ENCODE measurements at regions of chr13 and their contacts with region 1.

Region 1: GRCh38 chr13:21476893-21477472 is 17.9 kb upstream of the ZDHHC20 start:
- DNase-seq: peak; percentile 64 to 89 (median 72)
- ATAC-seq: peak; percentile 80
- H3K4me3 ChIP-seq: peak overlapping the region; percentile 37
- H3K4me3 Mint-ChIP-seq: peak overlapping the region; percentile 78
- H3K27ac ChIP-seq: no peak overlapping the region
- H3K27ac Mint-ChIP-seq: no peak overlapping the region
- H3K4me1 ChIP-seq: peaks cover 6% of the 10 kb centered on the region
- H3K4me1 Mint-ChIP-seq: peaks cover 17% of the 10 kb centered on the region
- H3K27me3 ChIP-seq: no peaks in the 10 kb centered on the region
- H3K27me3 Mint-ChIP-seq: peaks cover 10% of the 10 kb centered on the region
- CTCF ChIP-seq: peak; percentile 97

Region 2: GRCh38 chr13:20713751-20714150 is 763.2 kb before region 1 on chr13:
- CTCF ChIA-PET with region 1: no interaction called
- POLR2A ChIA-PET with region 1: no interaction called
- intact Hi-C with region 1: loop called in 1 of 2 experiments (anchors 5 kb)
- DNase-seq: no peak
- ATAC-seq: no peak
- H3K4me3 ChIP-seq: no peak overlapping the region
- H3K4me3 Mint-ChIP-seq: no peak overlapping the region
- H3K27ac ChIP-seq: no peak overlapping the region
- H3K27ac Mint-ChIP-seq: no peak overlapping the region
- H3K4me1 ChIP-seq: peaks cover 11% of the 10 kb centered on the region
- H3K4me1 Mint-ChIP-seq: peaks cover 11% of the 10 kb centered on the region
- H3K27me3 ChIP-seq: no peaks in the 10 kb centered on the region
- H3K27me3 Mint-ChIP-seq: peaks cover 9% of the 10 kb centered on the region
- CTCF ChIP-seq: no peak

Region 3: DNA sequence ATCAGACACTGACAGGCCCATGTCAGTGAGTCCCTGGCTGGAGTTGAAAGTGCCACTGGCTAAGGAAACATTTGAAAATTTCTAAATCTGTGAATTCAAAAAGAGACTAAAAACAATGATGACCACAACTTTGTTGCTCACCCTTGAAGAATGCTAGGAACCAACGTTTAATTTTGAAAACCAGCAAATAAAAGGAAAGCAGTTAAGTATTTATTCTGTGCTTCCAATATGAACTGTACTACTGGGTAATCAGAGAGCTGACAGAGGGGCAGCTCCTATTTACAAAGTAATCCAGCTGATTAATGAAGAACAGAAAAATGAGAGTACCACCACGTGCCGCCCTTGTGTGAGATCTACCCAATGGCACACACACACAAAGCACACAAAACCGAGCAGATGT is 370.9 kb before region 1 on chr13:
- CTCF ChIA-PET with region 1: interaction called, 10 read pairs
- POLR2A ChIA-PET with region 1: no interaction called
- intact Hi-C with region 1: loop called (anchors 1 kb)
- DNase-seq: no peak
- ATAC-seq: no peak
- H3K4me3 ChIP-seq: no peak overlapping the region
- H3K4me3 Mint-ChIP-seq: no peak overlapping the region
- H3K27ac ChIP-seq: no peak overlapping the region
- H3K27ac Mint-ChIP-seq: no peak overlapping the region
- H3K4me1 ChIP-seq: peaks cover 4% of the 10 kb centered on the region
- H3K4me1 Mint-ChIP-seq: no peaks in the 10 kb centered on the region
- H3K27me3 ChIP-seq: no peaks in the 10 kb centered on the region
- H3K27me3 Mint-ChIP-seq: no peaks in the 10 kb centered on the region
- CTCF ChIP-seq: no peak

Region 4: GRCh38 chr13:21310221-21310620 is 166.8 kb before region 1 on chr13:
- CTCF ChIA-PET with region 1: no interaction called
- POLR2A ChIA-PET with region 1: no interaction called
- intact Hi-C with region 1: no loop called
- DNase-seq: no peak
- ATAC-seq: no peak
- H3K4me3 ChIP-seq: no peak overlapping the region
- H3K4me3 Mint-ChIP-seq: no peak overlapping the region
- H3K27ac ChIP-seq: no peak overlapping the region
- H3K27ac Mint-ChIP-seq: no peak overlapping the region
- H3K4me1 ChIP-seq: no peaks in the 10 kb centered on the region
- H3K4me1 Mint-ChIP-seq: no peaks in the 10 kb centered on the region
- H3K27me3 ChIP-seq: no peaks in the 10 kb centered on the region
- H3K27me3 Mint-ChIP-seq: no peaks in the 10 kb centered on the region
- CTCF ChIP-seq: no peak

Measured in CD4-positive, alpha-beta T cell (primary cell).